ENCODE measurements at regions of chr2 and their contacts with region 1.

Region 1: DNA sequence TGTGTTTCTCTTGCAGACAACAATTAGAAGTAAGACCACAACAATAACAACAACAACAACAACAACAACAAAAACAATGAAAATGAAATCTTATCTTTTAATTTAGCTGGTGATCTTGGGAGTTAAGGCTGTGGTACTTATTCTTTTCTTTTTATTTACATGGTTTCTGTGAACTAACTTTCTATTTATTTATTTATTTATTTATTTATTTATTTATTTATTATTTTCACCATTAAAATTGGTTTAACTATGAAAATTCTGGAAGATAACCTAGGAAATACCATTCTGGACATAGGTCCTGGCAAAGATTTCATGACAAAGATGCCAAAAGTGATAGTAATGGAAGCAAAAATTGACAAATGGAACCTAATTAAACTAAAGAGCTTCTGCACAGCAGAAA is 102.5 kb upstream of the PNPT1 start:
- DNase-seq: no peak
- ATAC-seq: no peak
- H3K4me3 ChIP-seq: no peak overlapping the region
- H3K4me3 Mint-ChIP-seq: no peak overlapping the region
- H3K27ac ChIP-seq: no peak overlapping the region
- H3K27ac Mint-ChIP-seq: no peak overlapping the region
- H3K4me1 ChIP-seq: no peaks in the 10 kb centered on the region
- H3K4me1 Mint-ChIP-seq: no peaks in the 10 kb centered on the region
- H3K27me3 ChIP-seq: no peaks in the 10 kb centered on the region
- H3K27me3 Mint-ChIP-seq: peaks cover 3 to 5% of the 10 kb centered on the region in 2 donors

Region 2: DNA sequence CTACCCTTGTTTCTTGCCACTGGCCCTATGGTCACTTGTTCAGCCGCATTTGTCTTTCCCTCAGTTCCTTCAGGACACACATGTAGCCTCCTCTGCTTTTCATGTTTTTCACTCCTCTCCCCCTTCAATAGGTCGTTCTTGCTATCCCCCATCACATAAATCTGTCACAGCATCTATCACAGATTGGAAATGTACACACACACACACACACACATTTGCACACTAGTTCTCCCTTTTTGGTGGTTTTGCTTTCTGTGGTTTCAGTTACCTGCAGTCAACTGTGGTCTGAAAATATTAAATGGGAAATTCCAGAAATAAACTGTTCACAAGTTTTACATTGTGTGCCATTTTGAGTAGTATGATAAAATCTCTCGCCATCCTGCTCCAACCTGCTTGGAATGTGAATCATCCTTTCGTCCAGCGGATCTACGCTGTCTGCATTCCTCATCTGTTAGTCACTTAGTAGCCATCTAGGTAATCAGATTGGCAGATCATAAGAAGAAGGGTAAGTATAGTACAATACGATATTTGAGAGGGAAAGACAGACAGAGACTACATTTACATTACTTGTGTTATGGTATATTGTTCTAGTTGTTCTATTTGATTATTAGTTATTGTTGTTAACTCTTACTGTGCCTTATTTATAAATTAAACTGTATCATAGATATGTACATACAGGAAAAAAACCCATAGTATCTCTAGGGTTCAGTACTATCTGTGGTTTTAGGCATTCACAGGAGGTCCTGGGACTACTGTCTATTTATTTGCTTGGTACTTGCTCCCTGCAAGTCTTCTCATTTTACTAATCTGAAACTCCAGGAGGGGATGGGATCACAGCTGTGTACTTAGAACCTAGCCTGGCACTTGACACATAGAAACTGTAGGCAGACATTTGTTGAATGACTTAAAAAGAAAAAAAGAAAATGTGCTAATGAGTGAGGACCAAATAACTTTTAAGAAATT is 16.4 kb before region 1 on chr2:
- CTCF ChIA-PET with region 1: no interaction called
- POLR2A ChIA-PET with region 1: no interaction called
- DNase-seq: no peak
- ATAC-seq: no peak
- H3K4me3 ChIP-seq: no peak overlapping the region
- H3K4me3 Mint-ChIP-seq: no peak overlapping the region
- H3K27ac ChIP-seq: no peak overlapping the region
- H3K27ac Mint-ChIP-seq: no peak overlapping the region
- H3K4me1 ChIP-seq: no peaks in the 10 kb centered on the region
- H3K4me1 Mint-ChIP-seq: no peaks in the 10 kb centered on the region
- H3K27me3 ChIP-seq: no peaks in the 10 kb centered on the region
- H3K27me3 Mint-ChIP-seq: peaks cover 5 to 14% of the 10 kb centered on the region in 2 donors

Region 3: DNA sequence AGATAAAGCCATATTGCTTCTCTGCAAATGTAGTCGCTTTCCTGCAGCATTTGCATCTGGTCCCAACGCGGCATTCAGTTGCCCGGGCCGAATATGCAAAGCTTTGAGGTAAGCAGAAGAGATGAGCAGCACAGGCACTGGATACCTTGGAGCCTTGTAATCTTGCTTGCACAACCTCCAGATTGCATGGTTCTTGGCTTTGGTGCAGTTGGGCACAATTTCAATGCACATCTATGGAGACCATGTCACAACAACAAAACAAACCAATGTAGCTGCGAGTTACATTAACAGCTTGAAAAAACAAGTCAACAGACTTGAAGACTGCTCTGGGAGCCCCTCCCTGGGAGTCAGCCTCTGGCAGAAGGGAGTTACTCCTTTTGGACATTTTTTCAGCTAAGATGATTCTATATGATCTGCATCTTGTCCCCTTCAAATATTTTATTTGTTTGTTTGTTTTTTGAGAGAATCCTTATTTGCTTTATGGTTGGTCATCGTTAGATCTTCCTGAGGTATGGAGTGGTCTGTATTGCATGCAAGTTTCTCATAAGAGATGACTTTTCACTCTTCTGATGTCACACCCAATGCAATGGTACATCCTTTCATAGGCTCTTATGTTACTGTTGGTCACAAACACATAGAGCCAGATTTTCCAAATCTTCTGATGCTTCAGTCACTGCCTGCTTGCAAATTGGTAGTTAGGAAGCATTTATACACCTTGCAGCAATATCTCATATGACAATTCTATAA is 13.9 kb after region 1 on chr2:
- CTCF ChIA-PET with region 1: interaction called in 1 of 2 experiments, 15 read pairs
- POLR2A ChIA-PET with region 1: no interaction called
- DNase-seq: no peak
- ATAC-seq: no peak
- H3K4me3 ChIP-seq: no peak overlapping the region
- H3K4me3 Mint-ChIP-seq: no peak overlapping the region
- H3K27ac ChIP-seq: no peak overlapping the region
- H3K27ac Mint-ChIP-seq: no peak overlapping the region
- H3K4me1 ChIP-seq: no peaks in the 10 kb centered on the region
- H3K4me1 Mint-ChIP-seq: no peaks in the 10 kb centered on the region
- H3K27me3 ChIP-seq: no peaks in the 10 kb centered on the region
- H3K27me3 Mint-ChIP-seq: peaks cover 3 to 18% of the 10 kb centered on the region in 2 donors

Region 4: GRCh38 chr2:55948176-55948921 is 152.2 kb after region 1 on chr2:
- CTCF ChIA-PET with region 1: no interaction called
- POLR2A ChIA-PET with region 1: no interaction called
- DNase-seq: no peak
- ATAC-seq: no peak
- H3K4me3 ChIP-seq: no peak overlapping the region
- H3K4me3 Mint-ChIP-seq: no peak overlapping the region
- H3K27ac ChIP-seq: no peak overlapping the region
- H3K27ac Mint-ChIP-seq: no peak overlapping the region
- H3K4me1 ChIP-seq: no peaks in the 10 kb centered on the region
- H3K4me1 Mint-ChIP-seq: no peaks in the 10 kb centered on the region
- H3K27me3 ChIP-seq: no peaks in the 10 kb centered on the region
- H3K27me3 Mint-ChIP-seq: peaks cover 4 to 17% of the 10 kb centered on the region in 2 donors

Measured in T-cell (primary cell).